ENCODE measurements at regions of chr1 and their contacts with region 1.

Region 1: GRCh38 chr1:6343506-6344405 is 49.8 kb downstream of the ACOT7 start:
- DNase-seq: peak; percentile 78
- H3K4me3 Mint-ChIP-seq: no peak overlapping the region
- H3K27ac Mint-ChIP-seq: no peak overlapping the region
- H3K4me1 Mint-ChIP-seq: peaks cover 18% of the 10 kb centered on the region
- H3K27me3 Mint-ChIP-seq: no peaks in the 10 kb centered on the region

Region 2: GRCh38 chr1:6245086-6245868 is 98.5 kb before region 1 on chr1:
- CTCF ChIA-PET with region 1: interaction called, 12 read pairs
- POLR2A ChIA-PET with region 1: interaction called, 4 read pairs
- DNase-seq: peak; percentile 83
- H3K4me3 Mint-ChIP-seq: no peak overlapping the region
- H3K27ac Mint-ChIP-seq: no peak overlapping the region
- H3K4me1 Mint-ChIP-seq: peaks cover 24% of the 10 kb centered on the region
- H3K27me3 Mint-ChIP-seq: peaks cover 59% of the 10 kb centered on the region

Region 3: GRCh38 chr1:6359216-6360116 is 15.7 kb after region 1 on chr1:
- CTCF ChIA-PET with region 1: interaction called, 30 read pairs
- POLR2A ChIA-PET with region 1: interaction called, 22 read pairs
- DNase-seq: peak; percentile 72
- H3K4me3 Mint-ChIP-seq: peak overlapping the region; percentile 58
- H3K27ac Mint-ChIP-seq: peak overlapping the region; percentile 85
- H3K4me1 Mint-ChIP-seq: peaks cover 44% of the 10 kb centered on the region
- H3K27me3 Mint-ChIP-seq: no peaks in the 10 kb centered on the region

Region 4: GRCh38 chr1:6401673-6402072 is 57.9 kb after region 1 on chr1:
- CTCF ChIA-PET with region 1: interaction called, 59 read pairs
- POLR2A ChIA-PET with region 1: no interaction called
- DNase-seq: no peak
- H3K4me3 Mint-ChIP-seq: no peak overlapping the region
- H3K27ac Mint-ChIP-seq: no peak overlapping the region
- H3K4me1 Mint-ChIP-seq: peaks cover 12% of the 10 kb centered on the region
- H3K27me3 Mint-ChIP-seq: peaks cover 16% of the 10 kb centered on the region

Region 5: GRCh38 chr1:6438047-6438525 is 94.3 kb after region 1 on chr1:
- CTCF ChIA-PET with region 1: interaction called, 17 read pairs
- POLR2A ChIA-PET with region 1: no interaction called
- DNase-seq: peak; percentile 74
- H3K4me3 Mint-ChIP-seq: no peak overlapping the region
- H3K27ac Mint-ChIP-seq: no peak overlapping the region
- H3K4me1 Mint-ChIP-seq: peaks cover 7% of the 10 kb centered on the region
- H3K27me3 Mint-ChIP-seq: peaks cover 30% of the 10 kb centered on the region